Common myeloid progenitor, CD34-positive (primary cell): ENCODE measurements at regions of chr12 and their contacts with region 1.

Region 1: DNA sequence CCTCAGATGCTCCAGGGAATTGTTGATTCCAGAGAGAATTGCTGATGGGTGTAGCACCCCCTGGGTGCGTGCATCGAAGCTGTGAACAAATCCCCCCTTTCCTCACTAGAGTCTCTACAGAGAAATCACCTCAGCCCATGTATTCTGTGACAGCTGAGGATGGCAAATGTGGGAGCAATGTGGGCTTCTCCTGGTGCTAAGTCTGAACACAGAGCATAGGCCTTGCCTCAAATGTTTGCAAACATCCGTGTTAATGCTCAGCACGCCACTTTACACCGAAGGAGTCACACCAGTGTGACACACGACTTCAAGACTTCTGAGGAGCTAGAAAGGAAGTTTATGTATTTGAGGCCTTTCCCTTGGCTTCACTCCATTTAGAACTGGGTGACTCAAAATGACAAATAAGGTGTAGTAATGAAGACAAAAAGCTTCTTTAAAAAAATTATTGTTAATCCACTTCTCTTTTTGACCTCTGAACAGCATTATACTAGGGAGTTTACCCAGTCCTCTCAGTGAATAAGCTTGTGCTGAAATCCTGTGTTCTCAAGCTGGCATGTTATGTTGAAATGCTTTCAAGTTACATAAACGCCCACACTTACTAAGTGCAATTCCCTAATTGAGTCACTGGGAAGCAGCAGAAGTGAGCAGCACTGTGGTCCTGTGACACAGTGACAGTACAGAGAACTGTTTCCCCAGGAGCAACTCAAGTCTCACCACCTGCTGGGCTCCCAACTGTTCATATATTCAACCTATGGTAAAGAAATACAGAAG is 92.9 kb downstream of the FAR2 start:
- DNase-seq: peak; percentile 72 to 94 (median 93)
- H3K4me3 ChIP-seq: peak overlapping the region in 4 of 7 experiments; percentile 17 to 28 (median 24)
- H3K27ac ChIP-seq: peak overlapping the region; percentile 55 to 67
- H3K4me1 ChIP-seq: peaks cover 28 to 69% (median 42%) of the 10 kb centered on the region in 4 experiments
- H3K27me3 ChIP-seq: no peaks in the 10 kb centered on the region

Region 2: DNA sequence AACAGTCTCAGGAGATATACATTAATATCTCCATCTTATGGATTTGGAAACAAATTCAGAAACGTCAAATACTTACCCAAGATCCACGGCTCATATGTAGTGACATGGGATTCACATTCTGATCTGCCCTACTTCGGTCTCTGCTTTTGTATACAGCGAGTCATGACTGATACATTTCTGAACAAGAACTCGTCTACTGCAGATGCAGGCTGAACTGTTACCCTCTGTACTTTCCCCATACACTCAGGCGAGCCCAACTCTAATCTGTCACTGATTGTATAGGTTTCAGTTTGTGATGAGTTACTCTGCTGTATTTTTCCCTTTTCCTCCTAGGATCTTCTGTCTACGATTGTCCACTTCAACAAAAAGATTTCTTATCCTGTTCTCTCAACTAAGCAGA is 610.2 kb before region 1 on chr12:
- CTCF ChIA-PET with region 1: no interaction called
- POLR2A ChIA-PET with region 1: no interaction called
- DNase-seq: no peak
- H3K4me3 ChIP-seq: no peak overlapping the region
- H3K27ac ChIP-seq: no peak overlapping the region
- H3K4me1 ChIP-seq: no peaks in the 10 kb centered on the region
- H3K27me3 ChIP-seq: peaks cover 0 to 2% (median 0%) of the 10 kb centered on the region in 5 experiments

Region 3: GRCh38 chr12:29148911-29149690 is 92.9 kb before region 1 on chr12 and contains the start of gene FAR2:
- CTCF ChIA-PET with region 1: interaction called, 5 read pairs
- POLR2A ChIA-PET with region 1: interaction called, 31 read pairs
- DNase-seq: peak; percentile 71 to 93 (median 91)
- H3K4me3 ChIP-seq: peak within 1 kb of the TSS; percentile 57 to 96 (median 90)
- H3K27ac ChIP-seq: peak within 1 kb of the TSS; percentile 93 to 96
- H3K4me1 ChIP-seq: peaks cover 40 to 63% (median 56%) of the 10 kb centered on the region in 4 experiments
- H3K27me3 ChIP-seq: no peaks in the 10 kb centered on the region

Region 4: GRCh38 chr12:29216797-29217575 is 25.0 kb before region 1 on chr12:
- CTCF ChIA-PET with region 1: interaction called, 10 read pairs
- POLR2A ChIA-PET with region 1: interaction called, 9 read pairs
- DNase-seq: no peak
- H3K4me3 ChIP-seq: peak overlapping the region in 1 of 7 experiments; percentile 68
- H3K27ac ChIP-seq: peak overlapping the region in 1 of 2 experiments; percentile 35
- H3K4me1 ChIP-seq: peaks cover 15 to 43% (median 20%) of the 10 kb centered on the region in 4 experiments
- H3K27me3 ChIP-seq: no peaks in the 10 kb centered on the region

Region 5: DNA sequence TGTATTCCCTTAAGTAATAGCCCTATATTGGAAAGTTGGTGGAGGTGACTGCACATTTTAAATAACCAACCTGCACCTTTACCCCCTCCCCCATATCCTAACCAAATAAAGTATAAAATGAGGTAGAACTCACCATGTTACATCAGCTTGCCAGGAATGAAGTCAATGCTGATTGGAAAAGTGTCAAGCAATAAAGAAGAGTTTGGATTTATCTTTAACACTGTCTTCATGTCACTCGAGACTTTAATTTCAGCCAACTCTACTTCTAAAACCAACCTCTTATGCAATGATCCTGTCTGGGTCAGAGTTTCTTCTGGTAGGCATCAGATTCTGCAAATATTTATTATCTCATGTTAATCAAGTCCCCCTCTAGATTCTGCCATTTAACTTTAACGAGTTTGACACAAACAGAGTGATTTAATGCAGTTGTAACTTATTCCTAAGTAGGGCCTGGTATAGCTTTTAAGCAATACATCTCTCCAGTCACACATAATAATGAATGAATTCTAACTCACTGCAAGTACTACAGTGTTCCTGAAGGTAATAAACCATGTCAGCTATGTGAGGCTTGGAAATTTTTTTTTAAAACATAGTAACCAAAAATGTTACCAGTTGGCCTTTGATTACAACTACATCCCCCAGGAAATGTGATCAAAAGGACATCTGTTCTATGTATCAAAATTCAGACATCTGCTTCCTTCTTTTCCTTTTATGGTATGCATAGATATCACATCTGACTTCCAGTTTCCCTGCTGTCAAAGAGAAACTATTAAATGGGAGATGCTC is 40.2 kb after region 1 on chr12:
- CTCF ChIA-PET with region 1: interaction called, 11 read pairs
- POLR2A ChIA-PET with region 1: interaction called, 27 read pairs
- DNase-seq: peak; percentile 91 to 97 (median 95)
- H3K4me3 ChIP-seq: peak overlapping the region in 5 of 7 experiments; percentile 24 to 57 (median 56)
- H3K27ac ChIP-seq: peak overlapping the region; percentile 65 to 77
- H3K4me1 ChIP-seq: peaks cover 13 to 60% (median 33%) of the 10 kb centered on the region in 4 experiments
- H3K27me3 ChIP-seq: no peaks in the 10 kb centered on the region

Region 6: DNA sequence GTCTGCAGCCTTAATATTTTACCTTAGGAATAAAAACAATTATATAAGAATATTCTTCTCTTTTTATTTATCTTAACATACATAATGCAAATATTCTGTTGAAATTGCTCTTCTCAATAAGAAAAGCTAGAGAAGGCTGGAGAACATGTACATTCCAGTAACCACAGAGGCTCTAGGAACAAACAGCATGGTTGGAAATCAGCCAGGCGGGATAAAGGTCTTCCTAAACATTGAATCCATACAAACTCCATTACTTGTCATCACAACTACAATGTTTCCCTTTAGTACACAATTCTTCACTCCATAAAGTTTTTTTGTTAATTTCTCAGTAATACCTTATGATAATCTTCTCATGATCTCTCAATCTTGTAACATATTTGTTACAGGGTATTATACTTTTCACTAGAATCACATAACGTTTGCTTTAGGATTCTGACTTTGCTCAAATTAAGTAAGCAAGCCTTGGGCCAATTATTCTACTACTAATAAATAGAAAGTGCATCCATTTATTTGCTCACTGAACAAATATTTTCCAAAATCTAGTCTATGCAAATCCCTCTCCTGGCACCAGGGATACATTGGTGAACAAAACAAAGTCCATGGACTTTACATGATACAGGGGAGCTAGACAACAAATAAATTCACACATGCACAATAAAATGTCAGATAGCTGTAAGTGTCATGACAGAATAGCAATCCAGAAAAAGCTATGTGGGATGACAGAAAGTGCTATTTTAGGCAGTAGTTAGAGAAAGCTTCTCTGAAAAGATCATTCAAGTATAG is 779.2 kb after region 1 on chr12:
- CTCF ChIA-PET with region 1: no interaction called
- POLR2A ChIA-PET with region 1: no interaction called
- DNase-seq: no peak
- H3K4me3 ChIP-seq: no peak overlapping the region
- H3K27ac ChIP-seq: no peak overlapping the region
- H3K4me1 ChIP-seq: no peaks in the 10 kb centered on the region
- H3K27me3 ChIP-seq: no peaks in the 10 kb centered on the region